OCI-LY7 (cell line): ENCODE measurements at regions of chr11 and their contacts with region 1.

Region 1: GRCh38 chr11:2400069-2400760 is at the start of gene TSSC4:
- DNase-seq: peak; percentile 100
- H3K4me3 ChIP-seq: peak within 1 kb of the TSS; percentile 99
- H3K27ac ChIP-seq: peak within 1 kb of the TSS; percentile 80
- H3K4me1 ChIP-seq: peaks cover 23% of the 10 kb centered on the region
- CTCF ChIP-seq: peak; percentile 89
- total RNA-seq, gene TSSC4: 40.4 and 43.5 TPM in 2 replicates

Region 2: GRCh38 chr11:2305140-2305840 is 94.9 kb before region 1 on chr11:
- CTCF ChIA-PET with region 1: interaction called, 3 read pairs
- POLR2A ChIA-PET with region 1: interaction called, 4 read pairs
- intact Hi-C with region 1: loop called (anchors 1 kb)
- DNase-seq: peak; percentile 84
- H3K4me3 ChIP-seq: no peak overlapping the region
- H3K27ac ChIP-seq: no peak overlapping the region
- H3K4me1 ChIP-seq: peaks cover 8% of the 10 kb centered on the region
- CTCF ChIP-seq: peak; percentile 93

Region 3: GRCh38 chr11:2420502-2421225 is 20.4 kb after region 1 on chr11:
- CTCF ChIA-PET with region 1: interaction called, 3 read pairs
- POLR2A ChIA-PET with region 1: no interaction called
- intact Hi-C with region 1: loop called (anchors 1 kb)
- DNase-seq: peak; percentile 77
- H3K4me3 ChIP-seq: no peak overlapping the region
- H3K27ac ChIP-seq: no peak overlapping the region
- H3K4me1 ChIP-seq: no peaks in the 10 kb centered on the region
- CTCF ChIP-seq: peak; percentile 83